Stomach (tissue), 19 donors: ENCODE measurements at regions of chr2 and their contacts with region 1.

Region 1: DNA sequence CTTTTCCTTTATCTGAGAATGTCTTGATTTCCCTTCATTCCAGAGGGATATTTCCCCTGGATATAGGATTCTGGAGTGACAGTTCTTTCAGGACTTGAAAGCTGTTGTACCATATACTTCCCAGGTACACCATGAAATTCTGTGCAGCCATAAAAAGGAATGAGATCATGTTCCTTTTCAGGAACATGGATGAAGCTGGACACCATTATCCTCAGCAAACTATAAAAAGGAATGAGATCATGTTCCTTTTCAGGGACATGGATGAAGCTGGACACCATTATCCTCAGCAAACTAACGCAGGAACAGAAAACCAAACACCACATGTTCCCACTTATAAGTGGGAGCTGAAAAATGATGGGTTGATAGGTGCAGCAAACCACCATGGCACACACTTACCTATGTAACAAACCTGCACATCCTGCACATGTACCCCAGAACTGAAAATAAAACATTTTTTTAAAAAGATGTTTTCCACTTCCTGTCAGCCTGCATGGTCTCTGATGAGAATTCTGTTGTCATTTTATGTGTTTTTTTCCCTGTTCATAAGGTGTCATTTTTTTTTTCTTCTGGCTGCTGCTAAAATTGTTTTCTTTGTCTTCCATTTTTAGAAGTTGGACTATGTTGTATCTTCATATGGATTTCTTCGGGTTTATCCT is 133.3 kb downstream of the DNAH6 start:
- DNase-seq: no peak
- H3K4me3 ChIP-seq: no peak overlapping the region
- H3K27ac ChIP-seq: no peak overlapping the region
- H3K4me1 ChIP-seq: no peaks in the 10 kb centered on the region
- H3K27me3 ChIP-seq: no peaks in the 10 kb centered on the region
- CTCF ChIP-seq: no peak
- EP300 ChIP-seq: no peak
- POLR2A ChIP-seq: no peak

Region 2: DNA sequence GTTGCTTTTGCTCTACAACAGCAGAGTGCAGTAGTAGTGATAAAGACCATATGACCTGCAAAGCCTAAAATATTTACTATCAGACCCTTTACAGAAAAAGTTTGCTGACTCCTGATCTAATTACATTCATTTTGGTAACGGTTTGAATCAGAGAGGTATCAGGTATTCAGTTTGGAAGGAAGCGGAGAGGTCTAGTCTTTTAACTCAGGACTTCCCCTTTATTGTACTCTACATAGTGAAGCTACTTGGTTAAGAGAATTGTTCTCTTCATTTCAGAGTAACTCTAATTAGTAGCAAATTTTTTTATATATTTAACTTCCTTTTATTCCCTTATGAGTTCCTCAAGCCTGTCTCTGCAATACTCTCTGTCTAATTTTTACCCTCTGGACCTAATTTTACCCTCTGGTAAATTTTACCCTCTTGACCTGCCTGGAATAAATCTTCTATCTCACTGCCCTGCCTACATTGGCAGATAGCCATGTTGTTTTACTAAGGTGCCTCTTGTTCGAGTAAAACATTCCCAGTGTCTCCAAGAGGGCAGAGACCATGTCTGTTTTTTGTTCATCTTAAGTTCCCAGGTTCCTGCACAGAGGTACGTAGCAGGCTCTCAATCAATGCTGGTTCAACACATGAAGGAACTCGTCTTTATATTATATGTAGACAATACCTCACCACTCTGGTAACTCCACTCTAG is 37.3 kb after region 1 on chr2:
- intact Hi-C with region 1: no loop called
- DNase-seq: peak in 1 of 2 donors; percentile 14
- H3K4me3 ChIP-seq: no peak overlapping the region
- H3K27ac ChIP-seq: no peak overlapping the region
- H3K4me1 ChIP-seq: peaks cover 0 to 13% (median 0%) of the 10 kb centered on the region in 4 donors
- H3K27me3 ChIP-seq: no peaks in the 10 kb centered on the region
- CTCF ChIP-seq: no peak
- EP300 ChIP-seq: no peak
- POLR2A ChIP-seq: no peak

Region 3: DNA sequence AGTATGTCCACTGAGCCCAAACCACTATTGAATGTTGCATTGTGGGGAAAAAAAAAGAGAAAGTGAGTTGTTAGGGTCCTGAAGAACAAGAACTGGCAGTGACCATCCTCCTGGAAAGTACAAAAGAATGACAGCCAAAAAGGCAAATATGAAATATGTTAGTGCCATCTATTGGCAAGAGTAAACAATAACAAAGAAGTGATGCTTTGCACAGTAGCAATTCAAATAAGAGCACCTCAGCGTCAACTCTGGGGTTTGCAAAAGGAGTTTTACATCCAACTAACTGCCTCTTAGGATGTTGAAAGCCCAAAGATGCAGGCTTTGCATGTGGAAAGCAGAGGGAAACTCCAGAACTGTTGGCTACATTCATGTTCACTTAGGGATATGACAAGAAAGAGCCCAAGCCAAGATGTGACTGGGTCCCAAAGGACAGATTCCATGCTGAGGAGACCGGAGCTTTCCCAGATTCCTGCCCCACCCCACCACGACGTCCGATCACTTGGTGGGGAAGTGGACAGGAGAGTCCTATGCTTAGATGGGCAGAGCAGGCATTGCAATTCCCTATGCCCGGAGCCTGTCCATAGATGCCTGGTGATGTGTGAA is 215.7 kb after region 1 on chr2:
- intact Hi-C with region 1: loop called (anchors 10 kb)
- DNase-seq: no peak
- H3K4me3 ChIP-seq: no peak overlapping the region
- H3K27ac ChIP-seq: no peak overlapping the region
- H3K4me1 ChIP-seq: no peaks in the 10 kb centered on the region
- H3K27me3 ChIP-seq: no peaks in the 10 kb centered on the region
- CTCF ChIP-seq: no peak
- EP300 ChIP-seq: no peak
- POLR2A ChIP-seq: no peak